Activated CD4-positive, alpha-beta memory T cell treated with anti-CD3 and anti-CD28 coated beads for 36 hours (primary cell): ENCODE measurements at regions of chr14 and their contacts with region 1.

Region 1: DNA sequence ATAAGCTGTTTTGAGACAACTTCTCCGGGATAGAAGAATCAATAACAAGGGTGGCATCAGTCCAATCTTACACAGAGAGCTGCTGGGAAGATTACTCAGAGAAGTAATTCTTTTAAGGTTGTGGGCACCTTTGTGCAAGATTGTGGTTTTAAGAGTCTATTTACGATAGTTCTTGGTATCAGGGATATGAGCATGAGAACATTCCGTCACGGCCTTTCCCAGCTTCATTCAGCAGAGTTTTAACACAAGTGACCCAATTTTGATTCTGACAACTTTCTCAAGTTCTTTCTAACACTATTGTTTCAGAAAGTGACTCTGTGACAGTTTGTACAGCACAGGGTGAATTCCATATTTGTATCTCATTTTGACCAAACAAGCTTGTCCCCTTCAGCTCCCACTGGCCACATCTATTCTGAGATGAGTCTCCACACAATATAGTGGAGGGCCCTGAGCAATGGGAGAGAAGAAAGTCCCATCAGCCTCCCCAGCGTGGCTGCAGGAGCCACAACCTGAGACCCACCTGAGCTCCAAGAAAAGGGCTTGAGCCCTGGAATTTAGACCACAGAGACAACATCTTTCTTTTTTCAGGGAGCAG is 869.2 kb downstream of the TMEM121 start:
- DNase-seq: peak; percentile 61
- H3K4me3 Mint-ChIP-seq: peak overlapping the region; percentile 52
- H3K27ac Mint-ChIP-seq: peak overlapping the region; percentile 81
- H3K4me1 Mint-ChIP-seq: peaks cover 44% of the 10 kb centered on the region
- H3K27me3 Mint-ChIP-seq: peaks cover 9% of the 10 kb centered on the region

Region 2: DNA sequence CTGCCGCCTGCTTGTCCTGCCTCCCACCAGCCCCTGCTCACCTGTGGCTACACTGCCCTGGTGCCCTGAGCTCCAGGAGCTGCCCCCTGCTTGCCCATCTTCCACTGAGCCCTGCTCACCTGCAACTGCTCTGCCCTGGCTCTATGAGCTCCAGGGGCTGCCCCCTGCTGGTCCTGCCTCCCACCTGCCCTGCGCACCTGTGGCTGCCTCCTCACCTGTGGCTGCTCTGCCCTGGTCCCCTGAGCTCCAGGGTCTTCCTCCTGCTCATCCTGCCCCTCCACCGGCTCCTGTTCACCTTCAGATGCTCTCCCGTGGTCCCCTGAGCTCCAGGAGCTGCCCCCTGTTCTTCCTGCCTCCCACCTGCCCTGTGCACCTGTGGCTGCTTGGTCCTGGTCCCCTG is 621.6 kb before region 1 on chr14:
- CTCF ChIA-PET with region 1: no interaction called
- POLR2A ChIA-PET with region 1: no interaction called
- intact Hi-C with region 1: no loop called
- DNase-seq: no peak
- H3K4me3 Mint-ChIP-seq: no peak overlapping the region
- H3K27ac Mint-ChIP-seq: no peak overlapping the region
- H3K4me1 Mint-ChIP-seq: peaks cover 2% of the 10 kb centered on the region
- H3K27me3 Mint-ChIP-seq: peaks cover 6% of the 10 kb centered on the region

Region 3: DNA sequence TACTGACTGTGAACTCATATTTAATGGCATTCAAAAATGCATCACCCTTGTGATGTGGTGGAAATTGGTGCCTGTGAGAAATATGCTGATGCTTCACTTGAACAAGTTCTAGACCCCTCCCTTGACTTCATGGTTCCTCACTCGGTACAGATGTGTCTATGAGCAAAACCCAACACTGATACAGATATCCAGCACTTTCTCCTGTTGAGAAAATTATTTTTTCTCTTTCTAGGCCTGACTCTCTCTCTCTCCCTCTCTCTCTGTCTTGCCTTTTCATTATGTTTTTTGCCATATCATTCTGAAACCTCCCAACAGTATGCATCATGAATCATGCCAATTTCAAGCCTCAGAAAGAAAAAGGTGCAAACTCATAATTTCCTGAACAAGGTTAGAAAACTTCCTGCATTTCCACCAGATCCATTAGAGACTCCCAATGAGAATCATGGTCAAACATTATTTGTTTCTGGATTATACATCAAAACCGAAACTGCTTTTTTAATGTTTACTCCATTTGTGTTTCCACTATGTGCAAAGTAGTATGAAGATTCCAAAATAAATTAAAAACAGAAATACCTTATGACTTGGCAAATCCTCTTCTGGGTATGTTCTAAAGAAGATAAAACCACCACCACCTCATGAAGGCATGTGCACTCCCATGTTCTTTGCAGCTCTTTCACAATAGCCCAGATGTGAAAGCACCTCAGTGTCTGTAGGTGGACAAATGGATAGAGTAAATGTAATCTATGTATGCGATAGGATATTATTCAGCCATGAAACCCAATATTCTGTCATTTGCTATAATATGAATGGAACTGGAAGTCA is 325.5 kb before region 1 on chr14:
- CTCF ChIA-PET with region 1: no interaction called
- POLR2A ChIA-PET with region 1: no interaction called
- intact Hi-C with region 1: no loop called
- DNase-seq: peak; percentile 28
- H3K4me3 Mint-ChIP-seq: peak overlapping the region; percentile 1
- H3K27ac Mint-ChIP-seq: peak overlapping the region; percentile 70
- H3K4me1 Mint-ChIP-seq: peaks cover 30% of the 10 kb centered on the region
- H3K27me3 Mint-ChIP-seq: peaks cover 46% of the 10 kb centered on the region

Region 4: DNA sequence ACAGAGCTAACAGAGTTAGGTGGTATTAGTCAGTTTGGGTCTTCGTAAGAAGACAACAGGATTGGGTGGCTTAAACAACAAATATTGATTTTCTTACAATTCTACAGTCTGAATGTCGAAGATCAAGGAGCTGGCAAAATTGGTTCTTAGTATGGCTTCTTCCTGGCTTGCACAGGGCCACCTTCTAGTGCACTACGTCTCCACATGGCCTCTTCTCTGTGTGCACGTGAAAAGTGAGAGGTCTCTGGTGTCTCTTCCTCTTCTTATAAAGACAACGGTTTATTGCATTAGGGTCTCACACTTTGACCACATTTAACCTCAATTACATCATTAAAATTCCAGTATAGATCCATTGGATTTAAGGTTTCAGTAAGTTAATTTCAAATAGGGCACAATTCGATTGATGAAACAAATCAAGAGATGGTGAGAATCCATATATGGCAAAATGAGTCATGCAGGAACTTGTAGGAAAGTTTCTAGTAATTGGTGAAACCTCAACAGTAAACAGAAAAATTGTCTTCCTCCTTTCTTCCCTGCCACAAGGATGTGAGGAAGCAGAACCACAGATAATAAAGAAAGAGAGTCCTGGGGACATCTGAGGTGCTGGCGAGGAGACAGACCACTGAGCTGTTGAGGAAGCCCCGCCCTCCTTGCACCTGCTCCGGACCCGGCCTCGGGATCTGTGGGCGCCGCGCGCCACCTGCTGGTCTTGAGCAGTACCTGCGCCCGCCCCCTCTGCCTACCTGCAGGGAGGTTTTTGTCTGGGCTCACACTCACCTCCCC is 22.5 kb before region 1 on chr14:
- CTCF ChIA-PET with region 1: interaction called, 30 read pairs
- POLR2A ChIA-PET with region 1: no interaction called
- intact Hi-C with region 1: no loop called
- DNase-seq: peak; percentile 90
- H3K4me3 Mint-ChIP-seq: peak overlapping the region; percentile 56
- H3K27ac Mint-ChIP-seq: peak overlapping the region; percentile 21
- H3K4me1 Mint-ChIP-seq: peaks cover 21% of the 10 kb centered on the region
- H3K27me3 Mint-ChIP-seq: peaks cover 12% of the 10 kb centered on the region

Region 5: GRCh38 chr14:106378191-106378590 is 17.4 kb before region 1 on chr14:
- CTCF ChIA-PET with region 1: interaction called, 30 read pairs
- POLR2A ChIA-PET with region 1: no interaction called
- intact Hi-C with region 1: no loop called
- DNase-seq: peak; percentile 69
- H3K4me3 Mint-ChIP-seq: no peak overlapping the region
- H3K27ac Mint-ChIP-seq: no peak overlapping the region
- H3K4me1 Mint-ChIP-seq: peaks cover 21% of the 10 kb centered on the region
- H3K27me3 Mint-ChIP-seq: peaks cover 4% of the 10 kb centered on the region

Region 6: GRCh38 chr14:106665814-106666213 is 270.3 kb after region 1 on chr14:
- CTCF ChIA-PET with region 1: no interaction called
- POLR2A ChIA-PET with region 1: no interaction called
- intact Hi-C with region 1: no loop called
- DNase-seq: no peak
- H3K4me3 Mint-ChIP-seq: no peak overlapping the region
- H3K27ac Mint-ChIP-seq: no peak overlapping the region
- H3K4me1 Mint-ChIP-seq: peaks cover 22% of the 10 kb centered on the region
- H3K27me3 Mint-ChIP-seq: peaks cover 11% of the 10 kb centered on the region